ENCODE measurements at regions of chr7 and their contacts with region 1.

Region 1: GRCh38 chr7:1664711-1665548 is 5.1 kb upstream of the ELFN1 start:
- DNase-seq: peak; percentile 66 to 87 (median 86)
- ATAC-seq: peak; percentile 25 to 39
- H3K4me3 ChIP-seq: peak overlapping the region; percentile 81
- H3K27ac ChIP-seq: peak overlapping the region; percentile 21
- H3K4me1 ChIP-seq: no peaks in the 10 kb centered on the region
- H3K27me3 ChIP-seq: no peaks in the 10 kb centered on the region

Region 2: DNA sequence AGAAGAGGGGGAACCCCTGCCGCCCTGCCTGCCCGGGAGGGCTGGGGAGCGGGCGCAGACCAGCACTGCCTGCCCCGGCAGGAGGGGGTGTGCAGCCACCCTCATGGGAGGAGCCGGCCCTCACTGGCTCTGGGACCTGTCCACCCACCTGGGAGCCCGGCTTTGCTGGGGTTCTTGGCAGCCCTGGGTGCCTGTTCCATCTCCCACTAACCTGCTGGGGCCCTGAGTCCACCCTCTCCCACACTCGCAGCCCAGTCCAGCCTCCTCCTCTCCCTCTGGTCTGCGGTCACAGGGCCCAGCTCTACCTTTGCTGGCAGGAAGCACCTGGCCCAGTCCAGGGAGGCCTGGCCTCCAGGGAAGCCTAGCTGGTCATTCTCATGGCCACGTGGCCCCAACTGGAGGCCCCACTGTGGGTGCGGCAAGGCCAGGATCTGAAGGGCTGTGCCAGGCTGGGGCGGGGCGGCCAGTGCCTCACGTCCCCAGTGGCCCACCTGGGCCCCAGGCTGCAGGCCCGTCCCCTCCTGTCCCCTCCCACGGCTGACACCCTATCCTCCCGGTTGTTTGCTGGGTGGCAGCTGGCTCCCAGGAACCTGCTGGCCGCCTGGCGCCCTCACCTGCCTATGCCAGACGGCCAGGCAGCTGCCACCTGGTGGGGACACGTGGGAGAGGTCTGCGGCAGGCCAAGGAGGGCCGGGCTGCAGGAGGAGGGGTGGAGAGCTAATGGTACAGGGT is 109.0 kb before region 1 on chr7 and contains the start of gene TMEM184A:
- intact Hi-C with region 1: no loop called
- DNase-seq: peak in 2 of 3 donors; percentile 62 to 73
- ATAC-seq: peak; percentile 11 to 30
- H3K4me3 ChIP-seq: no peak within 1 kb of the TSS
- H3K27ac ChIP-seq: no peak within 1 kb of the TSS
- H3K4me1 ChIP-seq: no peaks in the 10 kb centered on the region
- H3K27me3 ChIP-seq: no peaks in the 10 kb centered on the region
- total RNA-seq, gene TMEM184A: 0.26 to 0.62 (median 0.49) TPM in 3 of 4 donors, not detected in the other

Region 3: GRCh38 chr7:1758028-1758858 is 93.3 kb after region 1 on chr7:
- intact Hi-C with region 1: loop called in 3 of 4 experiments (anchors 2 to 10 kb)
- DNase-seq: peak in 2 of 3 donors; percentile 44 to 76
- ATAC-seq: peak; percentile 66 to 73
- H3K4me3 ChIP-seq: no peak overlapping the region
- H3K27ac ChIP-seq: no peak overlapping the region
- H3K4me1 ChIP-seq: no peaks in the 10 kb centered on the region
- H3K27me3 ChIP-seq: no peaks in the 10 kb centered on the region

Region 4: DNA sequence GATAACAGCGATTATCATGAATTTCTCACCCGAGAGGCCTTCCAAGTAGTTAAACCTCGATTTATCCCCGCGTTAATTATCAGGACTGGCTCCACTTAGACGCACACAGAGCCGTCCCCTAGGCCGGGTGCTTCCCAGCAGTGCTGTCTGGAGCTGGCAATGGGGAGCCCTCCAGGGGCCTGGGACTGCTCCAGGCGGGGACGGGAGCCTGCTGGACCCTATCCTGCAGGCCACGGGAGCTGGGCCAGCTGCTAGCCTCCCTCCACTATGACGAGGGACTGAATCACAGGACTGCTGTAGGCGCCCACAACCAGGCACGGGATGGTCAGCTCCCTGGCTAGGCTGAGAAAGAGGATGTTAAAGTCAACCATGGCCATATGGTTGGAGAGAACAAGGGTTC is 234.3 kb after region 1 on chr7:
- intact Hi-C with region 1: loop called in 1 of 4 experiments (anchors 10 kb)
- DNase-seq: peak; percentile 84 to 92 (median 88)
- ATAC-seq: peak; percentile 84 to 87
- H3K4me3 ChIP-seq: no peak overlapping the region
- H3K27ac ChIP-seq: no peak overlapping the region
- H3K4me1 ChIP-seq: peaks cover 5% of the 10 kb centered on the region
- H3K27me3 ChIP-seq: no peaks in the 10 kb centered on the region

Region 5: GRCh38 chr7:2209146-2209960 is 544.4 kb after region 1 on chr7:
- intact Hi-C with region 1: loop called in 2 of 4 experiments (anchors 10 kb)
- DNase-seq: peak; percentile 77 to 90 (median 90)
- ATAC-seq: peak; percentile 58 to 75
- H3K4me3 ChIP-seq: no peak overlapping the region
- H3K27ac ChIP-seq: no peak overlapping the region
- H3K4me1 ChIP-seq: peaks cover 2% of the 10 kb centered on the region
- H3K27me3 ChIP-seq: no peaks in the 10 kb centered on the region

Region 6: GRCh38 chr7:2354186-2354938 is 689.4 kb after region 1 on chr7 and contains the start of gene EIF3B:
- intact Hi-C with region 1: loop called in 1 of 4 experiments (anchors 10 kb)
- DNase-seq: peak; percentile 92 to 96 (median 95)
- ATAC-seq: peak; percentile 95 to 96
- H3K4me3 ChIP-seq: peak within 1 kb of the TSS; percentile 79
- H3K27ac ChIP-seq: peak within 1 kb of the TSS; percentile 98
- H3K4me1 ChIP-seq: peaks cover 6% of the 10 kb centered on the region
- H3K27me3 ChIP-seq: no peaks in the 10 kb centered on the region
- total RNA-seq, gene EIF3B: 64.9 to 81.7 (median 72.8) TPM

Measured in right cardiac atrium (tissue), 5 donors.